ENCODE measurements at regions of chr3 and their contacts with region 1.

Region 1: GRCh38 chr3:141659821-141660613 is 78.1 kb upstream of the RNF7 start:
- H3K4me3 Mint-ChIP-seq: peak overlapping the region; percentile 82
- H3K27ac Mint-ChIP-seq: peak overlapping the region; percentile 52
- H3K4me1 Mint-ChIP-seq: peaks cover 34% of the 10 kb centered on the region
- H3K27me3 Mint-ChIP-seq: peaks cover 20% of the 10 kb centered on the region

Region 2: GRCh38 chr3:141094790-141095545 is 565.0 kb before region 1 on chr3:
- intact Hi-C with region 1: no loop called
- H3K4me3 Mint-ChIP-seq: no peak overlapping the region
- H3K27ac Mint-ChIP-seq: no peak overlapping the region
- H3K4me1 Mint-ChIP-seq: no peaks in the 10 kb centered on the region
- H3K27me3 Mint-ChIP-seq: peaks cover 3% of the 10 kb centered on the region

Region 3: GRCh38 chr3:141690431-141691072 is 30.5 kb after region 1 on chr3:
- intact Hi-C with region 1: loop called (anchors 5 kb)
- H3K4me3 Mint-ChIP-seq: no peak overlapping the region
- H3K27ac Mint-ChIP-seq: peak overlapping the region; percentile 58
- H3K4me1 Mint-ChIP-seq: peaks cover 33% of the 10 kb centered on the region
- H3K27me3 Mint-ChIP-seq: no peaks in the 10 kb centered on the region

Region 4: DNA sequence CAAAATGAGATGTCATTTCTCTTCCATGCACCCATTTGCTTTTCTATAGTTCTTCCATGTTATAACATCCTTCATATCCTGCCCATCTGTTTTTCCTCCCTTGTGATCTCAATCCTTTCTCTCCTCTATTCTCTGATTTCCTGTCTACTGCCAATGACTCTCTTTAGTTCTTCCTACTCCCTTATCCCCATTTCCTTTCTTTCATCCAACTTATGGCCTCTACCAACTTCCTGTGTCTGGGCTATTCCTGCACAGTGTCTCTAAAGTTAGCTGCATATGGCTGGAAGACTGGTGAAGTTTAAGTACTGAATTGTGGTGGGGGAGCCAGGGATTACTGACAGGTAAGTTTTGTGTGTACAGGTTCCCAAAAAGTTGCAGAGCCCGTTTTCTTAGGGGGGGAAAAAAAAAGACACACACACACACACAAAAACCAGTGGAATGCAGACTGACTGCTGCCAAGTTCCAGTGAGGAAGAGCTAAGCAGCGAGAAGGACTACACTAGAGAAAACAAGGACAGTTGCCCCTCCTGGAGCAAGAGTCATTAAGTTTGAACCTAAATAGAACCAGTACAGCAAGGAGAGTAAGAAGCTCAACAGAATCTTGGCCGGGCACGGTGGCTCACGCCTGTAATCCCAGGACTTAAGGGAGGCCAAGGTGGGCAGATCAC is 759.0 kb after region 1 on chr3:
- intact Hi-C with region 1: no loop called
- H3K4me3 Mint-ChIP-seq: no peak overlapping the region
- H3K27ac Mint-ChIP-seq: no peak overlapping the region
- H3K4me1 Mint-ChIP-seq: no peaks in the 10 kb centered on the region
- H3K27me3 Mint-ChIP-seq: no peaks in the 10 kb centered on the region

Measured in dendritic cell treated with granulocyte-macrophage colony-stimulating factor and Interleukin-4, amounts not matched to agents 40 ng/mL and 50 ng/mL, for 4 days (primary cell).